ENCODE measurements at regions of chr17 and their contacts with region 1.

Region 1: DNA sequence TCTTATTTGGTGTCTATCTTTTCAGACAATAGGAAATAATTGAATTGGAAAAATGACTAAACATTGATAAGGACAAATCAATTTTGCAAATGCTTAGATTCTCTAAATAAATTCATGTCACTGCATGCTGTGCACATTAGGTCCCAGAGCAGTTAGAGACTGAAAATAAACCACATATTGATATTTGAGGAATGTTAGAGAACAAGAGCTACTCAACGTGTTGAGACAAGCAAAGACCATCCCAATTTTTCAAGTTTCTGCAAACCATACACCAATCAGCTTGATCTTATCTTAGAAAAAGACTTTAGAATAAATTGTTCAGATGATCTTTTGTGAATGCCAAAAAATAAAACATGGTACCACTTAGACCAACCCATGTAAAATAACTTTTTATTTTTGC is 11.3 kb downstream of the KRTAP29-1 start:
- DNase-seq: no peak
- ATAC-seq: no peak
- H3K4me3 ChIP-seq: no peak overlapping the region
- H3K4me3 Mint-ChIP-seq: no peak overlapping the region
- H3K27ac ChIP-seq: no peak overlapping the region
- H3K27ac Mint-ChIP-seq: no peak overlapping the region
- H3K4me1 ChIP-seq: no peaks in the 10 kb centered on the region
- H3K4me1 Mint-ChIP-seq: no peaks in the 10 kb centered on the region
- H3K27me3 ChIP-seq: no peaks in the 10 kb centered on the region
- H3K27me3 Mint-ChIP-seq: peaks cover 4% of the 10 kb centered on the region
- CTCF ChIP-seq: no peak

Region 2: GRCh38 chr17:41254861-41255260 is 36.4 kb before region 1 on chr17:
- CTCF ChIA-PET with region 1: interaction called, 3 read pairs
- POLR2A ChIA-PET with region 1: no interaction called
- intact Hi-C with region 1: loop called in 1 of 2 experiments (anchors 5 kb)
- DNase-seq: no peak
- ATAC-seq: no peak
- H3K4me3 ChIP-seq: no peak overlapping the region
- H3K4me3 Mint-ChIP-seq: no peak overlapping the region
- H3K27ac ChIP-seq: no peak overlapping the region
- H3K27ac Mint-ChIP-seq: no peak overlapping the region
- H3K4me1 ChIP-seq: no peaks in the 10 kb centered on the region
- H3K4me1 Mint-ChIP-seq: peaks cover under 1% of the 10 kb centered on the region
- H3K27me3 ChIP-seq: no peaks in the 10 kb centered on the region
- H3K27me3 Mint-ChIP-seq: peaks cover 20% of the 10 kb centered on the region
- CTCF ChIP-seq: no peak